Lower leg skin (tissue), 4 donors: ENCODE measurements at regions of chr2 and their contacts with region 1.

Region 1: DNA sequence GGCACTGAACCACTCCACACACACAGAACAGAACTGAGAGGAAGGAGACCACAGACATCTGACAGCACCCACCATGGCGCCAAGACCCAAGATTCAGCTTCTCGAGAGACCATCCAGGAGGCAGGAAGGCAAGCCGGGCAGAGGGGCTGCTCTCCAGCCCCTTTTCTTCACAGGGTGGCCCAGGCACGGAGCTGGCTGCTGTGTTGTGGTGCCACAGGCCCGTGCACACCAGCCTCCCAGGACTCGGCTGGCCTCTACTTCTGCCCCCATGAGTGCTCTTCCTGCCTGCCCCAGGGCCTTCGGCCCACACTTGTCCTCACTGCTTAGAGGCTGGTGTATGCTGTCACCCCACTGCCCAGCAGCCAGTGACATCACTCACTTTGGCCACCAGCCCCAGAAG is 547.6 kb upstream of the RAB6C start:
- DNase-seq: no peak
- H3K4me3 ChIP-seq: no peak overlapping the region
- CTCF ChIP-seq: no peak
- POLR2A ChIP-seq: no peak

Region 2: GRCh38 chr2:131404753-131405152 is 1972.9 kb after region 1 on chr2:
- intact Hi-C with region 1: loop called (anchors 5 kb)
- DNase-seq: no peak
- H3K4me3 ChIP-seq: no peak overlapping the region
- CTCF ChIP-seq: no peak
- POLR2A ChIP-seq: no peak